CD8-positive, alpha-beta T cell (primary cell): ENCODE measurements at regions of chr12 and their contacts with region 1.

Region 1: GRCh38 chr12:14365294-14366208 is at the start of gene ATF7IP:
- DNase-seq: peak; percentile 92 to 99 (median 95)
- ATAC-seq: peak; percentile 89
- H3K4me3 ChIP-seq: peak within 1 kb of the TSS; percentile 63 to 80
- H3K4me3 Mint-ChIP-seq: peak within 1 kb of the TSS; percentile 87
- H3K27ac ChIP-seq: peak within 1 kb of the TSS; percentile 88
- H3K27ac Mint-ChIP-seq: peak within 1 kb of the TSS; percentile 93
- H3K4me1 ChIP-seq: peaks cover 24% of the 10 kb centered on the region
- H3K4me1 Mint-ChIP-seq: peaks cover 46% of the 10 kb centered on the region
- H3K27me3 ChIP-seq: no peaks in the 10 kb centered on the region
- H3K27me3 Mint-ChIP-seq: no peaks in the 10 kb centered on the region
- CTCF ChIP-seq: no peak
- total RNA-seq, gene ATF7IP: 125 to 126 TPM

Region 2: GRCh38 chr12:14257734-14258574 is 107.6 kb before region 1 on chr12:
- CTCF ChIA-PET with region 1: interaction called, 22 read pairs
- POLR2A ChIA-PET with region 1: interaction called, 24 read pairs
- intact Hi-C with region 1: loop called (anchors 1 kb)
- DNase-seq: peak; percentile 60 to 91 (median 84)
- ATAC-seq: peak; percentile 45
- H3K4me3 ChIP-seq: peak overlapping the region in 1 of 2 experiments; percentile 17
- H3K4me3 Mint-ChIP-seq: peak overlapping the region; percentile 73
- H3K27ac ChIP-seq: peak overlapping the region; percentile 72 to 87
- H3K27ac Mint-ChIP-seq: peak overlapping the region; percentile 99
- H3K4me1 ChIP-seq: peaks cover 39% of the 10 kb centered on the region
- H3K4me1 Mint-ChIP-seq: peaks cover 55% of the 10 kb centered on the region
- H3K27me3 ChIP-seq: no peaks in the 10 kb centered on the region
- H3K27me3 Mint-ChIP-seq: no peaks in the 10 kb centered on the region
- CTCF ChIP-seq: no peak

Region 3: GRCh38 chr12:14314801-14315200 is 50.8 kb before region 1 on chr12:
- CTCF ChIA-PET with region 1: no interaction called
- POLR2A ChIA-PET with region 1: no interaction called
- intact Hi-C with region 1: no loop called
- DNase-seq: no peak
- ATAC-seq: no peak
- H3K4me3 ChIP-seq: no peak overlapping the region
- H3K4me3 Mint-ChIP-seq: no peak overlapping the region
- H3K27ac ChIP-seq: no peak overlapping the region
- H3K27ac Mint-ChIP-seq: no peak overlapping the region
- H3K4me1 ChIP-seq: no peaks in the 10 kb centered on the region
- H3K4me1 Mint-ChIP-seq: no peaks in the 10 kb centered on the region
- H3K27me3 ChIP-seq: no peaks in the 10 kb centered on the region
- H3K27me3 Mint-ChIP-seq: no peaks in the 10 kb centered on the region
- CTCF ChIP-seq: no peak

Region 4: DNA sequence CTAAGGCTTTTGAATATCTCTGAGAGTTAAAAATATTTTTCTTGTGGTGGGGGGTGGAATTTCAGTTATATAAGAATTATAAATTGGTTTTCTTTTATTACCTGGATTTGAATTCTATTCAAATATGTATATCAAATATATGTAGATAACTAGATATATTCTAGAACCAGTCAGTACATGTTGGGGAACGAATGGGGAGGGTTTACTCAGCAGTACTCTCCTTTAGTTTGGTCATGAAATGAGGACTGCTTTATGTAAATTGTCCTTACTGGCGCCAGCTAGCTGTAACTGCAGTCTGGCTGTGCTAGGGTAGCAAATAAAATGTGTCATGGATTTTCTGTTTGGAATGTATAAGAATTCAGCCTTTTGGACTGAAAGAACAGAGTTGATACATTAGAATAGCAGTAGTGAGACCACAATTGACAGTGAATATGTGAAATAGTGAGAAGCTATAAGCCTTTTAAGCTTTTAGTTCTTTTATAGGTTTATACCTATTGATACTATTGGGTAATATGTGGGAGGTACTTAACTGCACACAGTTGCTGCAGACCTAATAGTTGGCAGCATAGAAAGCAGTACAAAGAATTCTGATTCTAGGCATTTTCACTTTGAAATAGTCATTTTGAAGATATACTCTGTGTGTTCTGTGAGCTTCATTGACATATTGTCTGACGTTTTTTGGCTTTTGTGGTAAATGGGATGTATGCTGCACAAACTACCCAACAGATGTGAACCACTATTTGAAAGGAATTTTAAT is 28.9 kb after region 1 on chr12:
- CTCF ChIA-PET with region 1: interaction called, 9 read pairs
- POLR2A ChIA-PET with region 1: interaction called, 90 read pairs
- intact Hi-C with region 1: loop called in 1 of 2 experiments (anchors 1 kb)
- DNase-seq: peak in 5 of 9 experiments; percentile 35 to 89 (median 52)
- ATAC-seq: peak; percentile 61
- H3K4me3 ChIP-seq: peak overlapping the region in 1 of 2 experiments; percentile 19
- H3K4me3 Mint-ChIP-seq: peak overlapping the region; percentile 67
- H3K27ac ChIP-seq: peak overlapping the region; percentile 39 to 75
- H3K27ac Mint-ChIP-seq: peak overlapping the region; percentile 84
- H3K4me1 ChIP-seq: peaks cover 90% of the 10 kb centered on the region
- H3K4me1 Mint-ChIP-seq: peaks cover 83% of the 10 kb centered on the region
- H3K27me3 ChIP-seq: no peaks in the 10 kb centered on the region
- H3K27me3 Mint-ChIP-seq: no peaks in the 10 kb centered on the region
- CTCF ChIP-seq: no peak

Region 5: DNA sequence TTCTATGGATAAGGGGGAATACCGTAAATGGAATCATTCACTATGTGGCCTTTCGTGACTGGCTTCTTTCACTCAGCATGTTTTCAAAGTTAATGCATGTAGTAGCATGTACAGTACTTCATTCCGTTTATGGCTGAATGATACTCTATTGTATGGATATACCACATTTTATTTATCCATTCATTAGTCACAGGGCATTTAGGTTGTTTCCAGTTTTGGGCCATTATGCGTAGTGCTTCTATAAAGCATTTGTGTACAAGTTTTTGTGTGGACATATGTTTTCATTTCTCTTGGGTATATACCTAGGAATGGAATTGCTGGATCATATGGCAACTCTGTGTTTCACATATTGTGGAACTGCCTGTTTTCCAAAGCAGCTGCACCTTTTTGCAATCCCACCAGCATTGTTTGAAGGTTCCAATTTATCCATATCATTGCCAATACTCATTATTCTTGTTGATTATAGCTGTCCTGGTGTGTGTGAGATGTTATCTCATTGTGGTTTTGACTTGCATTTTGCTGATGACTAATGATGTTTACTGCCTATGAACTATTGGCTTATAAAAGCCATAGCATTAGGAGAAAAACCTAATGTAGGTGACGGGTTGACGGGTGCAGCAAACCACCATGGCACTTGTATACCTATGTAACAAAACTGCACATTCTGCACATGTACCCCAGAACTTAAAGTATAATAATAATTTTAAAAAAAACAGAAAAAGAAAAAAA is 45.5 kb after region 1 on chr12:
- CTCF ChIA-PET with region 1: interaction called, 4 read pairs
- POLR2A ChIA-PET with region 1: interaction called, 39 read pairs
- intact Hi-C with region 1: loop called in 1 of 2 experiments (anchors 2 kb)
- DNase-seq: peak in 5 of 9 experiments; percentile 22 to 81 (median 50)
- ATAC-seq: peak; percentile 78
- H3K4me3 ChIP-seq: no peak overlapping the region
- H3K4me3 Mint-ChIP-seq: peak overlapping the region; percentile 9
- H3K27ac ChIP-seq: peak overlapping the region in 1 of 2 experiments; percentile 62
- H3K27ac Mint-ChIP-seq: peak overlapping the region; percentile 39
- H3K4me1 ChIP-seq: peaks cover 79% of the 10 kb centered on the region
- H3K4me1 Mint-ChIP-seq: peaks cover 68% of the 10 kb centered on the region
- H3K27me3 ChIP-seq: no peaks in the 10 kb centered on the region
- H3K27me3 Mint-ChIP-seq: no peaks in the 10 kb centered on the region
- CTCF ChIP-seq: no peak

Region 6: GRCh38 chr12:14454098-14454907 is 88.8 kb after region 1 on chr12:
- CTCF ChIA-PET with region 1: interaction called, 5 read pairs
- POLR2A ChIA-PET with region 1: interaction called, 11 read pairs
- intact Hi-C with region 1: no loop called
- DNase-seq: peak in 3 of 9 experiments; percentile 13 to 70 (median 59)
- ATAC-seq: peak; percentile 91
- H3K4me3 ChIP-seq: no peak overlapping the region
- H3K4me3 Mint-ChIP-seq: no peak overlapping the region
- H3K27ac ChIP-seq: peak overlapping the region in 1 of 2 experiments; percentile 21
- H3K27ac Mint-ChIP-seq: peak overlapping the region; percentile 76
- H3K4me1 ChIP-seq: peaks cover 8% of the 10 kb centered on the region
- H3K4me1 Mint-ChIP-seq: peaks cover 53% of the 10 kb centered on the region
- H3K27me3 ChIP-seq: no peaks in the 10 kb centered on the region
- H3K27me3 Mint-ChIP-seq: no peaks in the 10 kb centered on the region
- CTCF ChIP-seq: peak; percentile 44

Region 7: DNA sequence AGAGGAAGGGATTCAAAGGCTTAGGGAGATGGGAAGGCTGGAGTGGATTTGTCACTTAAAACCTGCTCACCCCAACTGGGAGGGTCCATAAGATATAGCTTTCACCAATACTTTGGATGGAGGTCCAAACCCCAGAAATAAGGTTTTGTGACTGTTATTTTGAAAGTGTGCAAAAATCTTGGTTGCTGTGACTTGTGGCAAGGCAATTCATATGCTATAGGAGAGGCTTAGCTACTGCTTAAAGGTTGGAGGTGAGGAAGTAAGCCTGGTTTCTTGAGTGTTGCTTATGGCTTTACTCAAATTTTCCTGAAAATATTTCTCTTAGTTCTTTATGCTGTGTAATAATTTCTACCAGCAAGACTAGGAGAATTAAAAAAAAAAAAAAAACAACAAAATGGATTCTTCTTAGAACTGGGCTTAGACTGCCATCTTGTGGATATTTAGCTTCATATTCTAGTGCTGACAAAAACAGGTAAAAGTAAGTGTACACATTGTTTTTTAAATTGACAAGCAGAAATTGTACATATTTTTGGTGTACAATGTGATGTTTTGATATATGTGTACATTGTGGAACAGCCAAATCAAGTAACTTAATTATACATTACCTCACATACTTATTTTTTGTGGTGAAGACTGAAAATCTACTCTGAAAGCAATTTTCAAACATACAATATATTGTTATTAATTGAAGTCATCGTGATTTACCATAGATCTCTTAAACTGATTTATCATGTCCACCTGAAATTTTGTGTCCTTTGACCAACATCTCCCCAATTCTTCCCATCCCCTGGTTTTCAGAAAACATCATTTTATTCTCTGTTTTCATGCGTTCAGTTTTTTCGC is 630.3 kb after region 1 on chr12:
- CTCF ChIA-PET with region 1: no interaction called
- POLR2A ChIA-PET with region 1: no interaction called
- intact Hi-C with region 1: no loop called
- DNase-seq: peak in 2 of 9 experiments; percentile 78 to 85
- ATAC-seq: peak; percentile 70
- H3K4me3 ChIP-seq: no peak overlapping the region
- H3K4me3 Mint-ChIP-seq: peak overlapping the region; percentile 20
- H3K27ac ChIP-seq: no peak overlapping the region
- H3K27ac Mint-ChIP-seq: peak overlapping the region; percentile 63
- H3K4me1 ChIP-seq: peaks cover 29% of the 10 kb centered on the region
- H3K4me1 Mint-ChIP-seq: peaks cover 31% of the 10 kb centered on the region
- H3K27me3 ChIP-seq: no peaks in the 10 kb centered on the region
- H3K27me3 Mint-ChIP-seq: peaks cover 2% of the 10 kb centered on the region
- CTCF ChIP-seq: peak; percentile 75

Region 8: GRCh38 chr12:15789220-15790171 is 1423.9 kb after region 1 on chr12 and contains the start of gene EPS8:
- CTCF ChIA-PET with region 1: no interaction called
- POLR2A ChIA-PET with region 1: no interaction called
- intact Hi-C with region 1: loop called in 1 of 2 experiments (anchors 10 kb)
- DNase-seq: peak; percentile 76 to 93 (median 87)
- ATAC-seq: peak; percentile 88
- H3K4me3 ChIP-seq: peak within 1 kb of the TSS; percentile 68 to 87
- H3K4me3 Mint-ChIP-seq: peak within 1 kb of the TSS; percentile 97
- H3K27ac ChIP-seq: peak within 1 kb of the TSS in 1 of 2 experiments; percentile 41
- H3K27ac Mint-ChIP-seq: peak within 1 kb of the TSS; percentile 42
- H3K4me1 ChIP-seq: peaks cover 8% of the 10 kb centered on the region
- H3K4me1 Mint-ChIP-seq: peaks cover 14% of the 10 kb centered on the region
- H3K27me3 ChIP-seq: peaks cover 8 to 15% of the 10 kb centered on the region in 2 experiments
- H3K27me3 Mint-ChIP-seq: peaks cover 39% of the 10 kb centered on the region
- CTCF ChIP-seq: no peak
- total RNA-seq, gene EPS8: 1.7 to 2.1 TPM